ENCODE measurements at regions of chr22 and their contacts with region 1.

Region 1: DNA sequence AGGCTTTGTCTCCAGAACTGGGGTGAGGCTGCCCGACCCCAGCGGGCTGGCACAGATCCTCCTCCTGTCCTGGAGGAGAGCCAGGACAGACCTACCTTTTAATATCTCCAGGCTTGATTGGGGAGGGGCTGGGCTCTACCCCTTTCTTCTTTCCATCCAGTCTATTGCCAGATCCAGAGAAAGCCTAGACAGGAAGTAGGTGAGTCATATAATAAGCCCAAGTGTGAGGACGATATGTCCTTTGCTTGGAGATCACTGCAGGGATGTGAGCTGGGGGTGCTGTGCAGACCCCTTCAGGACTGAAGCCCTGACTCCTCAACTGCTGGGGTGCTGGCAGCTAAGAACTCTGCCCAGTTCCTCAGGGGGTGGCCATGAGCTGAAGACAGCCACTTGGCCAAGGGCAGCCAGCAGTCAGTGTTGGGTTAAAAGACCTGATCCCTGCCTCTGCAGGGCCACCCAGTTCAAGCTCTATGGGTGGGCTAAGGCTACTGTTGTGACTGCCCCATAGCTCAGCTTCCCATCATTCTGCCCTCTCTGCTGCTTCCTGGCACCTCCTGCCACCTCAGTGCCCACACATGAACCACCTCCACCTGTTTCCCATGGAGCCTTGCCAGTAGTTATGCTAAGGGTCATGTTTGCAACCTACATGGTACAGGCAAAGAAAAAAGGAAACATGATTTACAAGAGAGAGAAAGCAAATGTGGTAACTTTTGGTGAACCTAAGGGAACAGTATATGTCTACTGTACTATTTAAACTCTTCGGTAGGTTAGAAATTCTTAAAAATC is 8.3 kb upstream of the C22orf39 start:
- DNase-seq: no peak
- H3K4me3 ChIP-seq: no peak overlapping the region
- H3K27ac ChIP-seq: no peak overlapping the region
- H3K4me1 ChIP-seq: no peaks in the 10 kb centered on the region
- H3K27me3 ChIP-seq: no peaks in the 10 kb centered on the region
- CTCF ChIP-seq: no peak
- EP300 ChIP-seq: no peak
- POLR2A ChIP-seq: no peak
- RAD21 ChIP-seq: no peak

Region 2: DNA sequence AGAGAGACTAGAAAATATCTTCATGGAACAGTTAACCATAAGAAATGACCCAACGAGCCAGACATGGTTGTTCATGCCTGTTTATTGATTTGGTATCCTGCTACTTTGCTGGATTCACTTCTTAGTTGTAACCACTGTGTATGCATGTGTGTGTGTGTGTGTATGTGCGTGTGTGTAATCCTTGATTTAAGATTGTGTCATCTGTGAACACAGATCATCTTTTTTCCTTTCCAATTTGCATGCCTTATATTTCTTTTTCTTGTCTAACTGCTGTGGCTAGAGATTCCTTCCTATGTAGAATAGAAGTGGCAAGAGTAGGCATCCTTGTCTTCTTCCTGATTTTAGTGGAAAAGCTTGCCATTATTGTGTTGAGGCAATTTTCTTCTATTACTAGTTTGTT is 147.9 kb before region 1 on chr22:
- CTCF ChIA-PET with region 1: no interaction called
- POLR2A ChIA-PET with region 1: no interaction called
- DNase-seq: no peak
- H3K4me3 ChIP-seq: no peak overlapping the region
- H3K27ac ChIP-seq: no peak overlapping the region
- H3K4me1 ChIP-seq: no peaks in the 10 kb centered on the region
- H3K27me3 ChIP-seq: no peaks in the 10 kb centered on the region
- CTCF ChIP-seq: no peak
- EP300 ChIP-seq: no peak
- POLR2A ChIP-seq: no peak
- RAD21 ChIP-seq: no peak

Region 3: GRCh38 chr22:19442166-19442565 is 13.6 kb before region 1 on chr22:
- CTCF ChIA-PET with region 1: interaction called, 3 read pairs
- POLR2A ChIA-PET with region 1: interaction called, 12 read pairs
- DNase-seq: no peak
- H3K4me3 ChIP-seq: no peak overlapping the region
- H3K27ac ChIP-seq: no peak overlapping the region
- H3K4me1 ChIP-seq: peaks cover 0 to 5% (median 1%) of the 10 kb centered on the region in 4 experiments; a peak in 2 of 7 replicates
- H3K27me3 ChIP-seq: no peaks in the 10 kb centered on the region; a peak in 2 of 7 replicates
- CTCF ChIP-seq: no peak
- EP300 ChIP-seq: no peak
- POLR2A ChIP-seq: no peak
- RAD21 ChIP-seq: no peak

Region 4: DNA sequence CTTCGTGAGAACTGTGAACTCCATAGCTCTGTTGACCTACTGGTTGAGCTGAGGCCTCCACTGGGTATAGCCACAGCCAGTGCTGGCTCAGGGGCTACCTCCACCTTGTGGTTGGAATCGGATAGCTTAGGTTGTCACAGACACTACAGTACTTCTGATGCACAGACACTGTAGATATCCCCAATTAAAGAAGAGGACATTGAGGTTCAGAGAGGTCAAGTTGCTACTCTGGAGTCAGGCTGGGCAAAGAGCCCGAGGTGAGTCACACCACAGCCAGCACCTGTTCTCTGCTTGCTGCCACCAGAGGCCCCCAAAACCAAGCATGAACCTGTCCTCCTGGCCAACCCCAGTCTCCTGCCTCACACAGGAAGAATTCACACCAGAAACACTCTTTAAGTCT is 17.8 kb after region 1 on chr22:
- CTCF ChIA-PET with region 1: interaction called, 19 read pairs
- POLR2A ChIA-PET with region 1: interaction called, 8 read pairs
- DNase-seq: no peak
- H3K4me3 ChIP-seq: no peak overlapping the region
- H3K27ac ChIP-seq: no peak overlapping the region
- H3K4me1 ChIP-seq: peaks cover 0 to 4% (median 1%) of the 10 kb centered on the region in 4 experiments; a peak in 2 of 7 replicates
- H3K27me3 ChIP-seq: no peaks in the 10 kb centered on the region
- CTCF ChIP-seq: peak in 1 of 3 experiments; percentile 20; a peak in 1 of 4 replicates
- EP300 ChIP-seq: no peak
- POLR2A ChIP-seq: no peak
- RAD21 ChIP-seq: no peak

Region 5: DNA sequence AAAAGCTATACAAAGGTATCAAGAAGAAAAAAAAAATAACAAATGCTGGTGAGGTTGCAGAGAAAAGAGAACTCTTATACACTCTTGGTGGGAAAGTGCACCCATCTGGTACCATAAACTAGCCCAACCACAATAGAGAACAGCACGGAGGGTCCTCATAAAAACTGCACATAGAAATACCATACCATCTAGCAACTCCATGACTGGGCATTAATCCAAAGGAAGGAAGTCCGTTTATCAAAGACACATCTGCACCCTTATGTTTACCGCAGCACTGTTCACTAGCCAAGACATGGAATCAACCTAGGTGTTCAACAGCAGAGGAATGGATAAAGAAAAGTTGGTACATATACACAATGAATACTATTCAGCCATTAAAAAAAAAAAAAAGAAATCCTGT is 79.2 kb after region 1 on chr22:
- CTCF ChIA-PET with region 1: no interaction called
- POLR2A ChIA-PET with region 1: no interaction called
- DNase-seq: no peak
- H3K4me3 ChIP-seq: no peak overlapping the region
- H3K27ac ChIP-seq: no peak overlapping the region
- H3K4me1 ChIP-seq: no peaks in the 10 kb centered on the region; a peak in 1 of 7 replicates
- H3K27me3 ChIP-seq: no peaks in the 10 kb centered on the region
- CTCF ChIP-seq: no peak
- EP300 ChIP-seq: no peak
- POLR2A ChIP-seq: no peak
- RAD21 ChIP-seq: no peak

Region 6: DNA sequence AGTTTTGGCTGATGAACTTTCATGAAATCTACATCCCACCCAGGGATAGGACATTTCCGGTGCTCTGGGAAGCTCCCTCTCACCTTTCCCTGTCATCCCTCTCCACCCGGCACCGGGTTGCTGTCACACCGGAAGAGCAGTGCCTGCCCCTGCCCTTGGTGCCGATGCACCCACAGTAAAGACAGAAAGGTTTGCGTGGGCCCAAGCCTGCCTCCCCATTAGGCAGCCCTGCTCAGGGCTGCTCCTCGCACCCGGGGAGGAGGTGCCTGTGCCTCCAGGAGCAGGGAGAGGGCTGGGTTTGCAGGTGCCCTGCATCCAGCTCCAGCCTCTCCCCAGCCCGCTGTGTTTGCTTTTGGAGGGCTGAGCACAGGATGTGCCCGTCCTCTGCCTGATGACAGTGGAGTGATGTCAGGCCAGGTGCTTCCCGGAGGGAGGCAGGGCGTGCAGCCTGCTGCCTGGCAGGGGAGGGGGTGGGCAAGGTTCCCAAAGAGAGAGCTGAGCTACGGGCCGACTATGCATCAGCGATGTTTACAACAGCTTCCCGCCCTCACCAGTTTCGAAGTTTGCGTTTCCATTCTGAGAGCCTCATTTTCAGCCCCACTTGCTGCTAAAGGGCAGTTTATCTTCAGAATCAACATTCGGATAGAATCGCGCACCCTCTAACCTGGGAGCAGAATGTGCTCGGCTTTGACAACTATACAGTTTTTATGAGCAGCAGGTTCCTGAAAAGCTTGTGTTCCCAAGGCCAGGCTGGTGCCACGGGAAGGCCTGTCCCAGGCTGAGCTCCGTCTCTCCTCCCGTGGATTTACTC is 151.6 kb after region 1 on chr22:
- CTCF ChIA-PET with region 1: no interaction called
- POLR2A ChIA-PET with region 1: no interaction called
- DNase-seq: peak in 1 of 2 experiments; percentile 55
- H3K4me3 ChIP-seq: no peak overlapping the region
- H3K27ac ChIP-seq: no peak overlapping the region
- H3K4me1 ChIP-seq: peaks cover 0 to 26% (median 21%) of the 10 kb centered on the region in 4 experiments; a peak in 6 of 7 replicates
- H3K27me3 ChIP-seq: no peaks in the 10 kb centered on the region
- CTCF ChIP-seq: no peak
- EP300 ChIP-seq: no peak
- POLR2A ChIP-seq: no peak
- RAD21 ChIP-seq: no peak